Sigmoid colon (tissue), 7 donors: ENCODE measurements at regions of chr15 and their contacts with region 1.

Region 1: GRCh38 chr15:65384895-65385858 is 7.4 kb upstream of the IGDCC3 start:
- DNase-seq: peak; percentile 92
- H3K4me3 ChIP-seq: peak overlapping the region in 3 of 4 donors; percentile 21 to 41 (median 34)
- H3K27ac ChIP-seq: peak overlapping the region; percentile 39 to 52 (median 41)
- H3K4me1 ChIP-seq: peaks cover 0 to 19% (median 17%) of the 10 kb centered on the region in 4 donors
- H3K27me3 ChIP-seq: peaks cover 0 to 5% (median 0%) of the 10 kb centered on the region in 3 donors
- CTCF ChIP-seq: peak; percentile 83 to 86 (median 84)
- EP300 ChIP-seq: no peak
- POLR2A ChIP-seq: no peak

Region 2: GRCh38 chr15:65192016-65192415 is 193.2 kb before region 1 on chr15:
- intact Hi-C with region 1: loop called (anchors 10 kb)
- DNase-seq: peak; percentile 41
- H3K4me3 ChIP-seq: no peak overlapping the region
- H3K27ac ChIP-seq: no peak overlapping the region
- H3K4me1 ChIP-seq: peaks cover 0 to 31% (median 19%) of the 10 kb centered on the region in 4 donors
- H3K27me3 ChIP-seq: no peaks in the 10 kb centered on the region
- CTCF ChIP-seq: no peak
- EP300 ChIP-seq: no peak
- POLR2A ChIP-seq: no peak

Region 3: DNA sequence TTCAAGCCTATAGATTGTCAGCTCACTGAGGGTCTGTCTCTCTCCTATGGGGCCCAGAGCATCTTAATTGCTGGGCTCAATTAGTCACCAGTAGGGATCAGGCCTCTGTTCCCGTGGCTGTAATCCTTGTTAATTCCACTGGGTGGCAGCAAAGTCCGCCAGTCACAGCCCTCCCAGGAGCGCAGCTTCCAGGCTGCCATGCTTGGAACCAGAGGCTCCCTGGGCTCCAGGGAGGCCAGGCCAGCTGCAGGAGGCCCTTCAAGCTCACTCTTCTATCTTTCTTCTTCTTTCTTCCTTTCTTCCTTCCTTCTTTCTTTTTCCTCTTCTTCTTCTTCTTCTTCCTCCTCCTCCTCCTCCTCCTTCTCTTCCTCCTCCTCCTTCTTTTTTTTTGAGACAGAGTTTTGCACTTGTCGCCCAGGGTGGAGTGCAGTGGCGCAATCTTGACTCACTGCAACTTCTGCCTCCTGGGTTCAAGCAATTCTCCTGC is 66.3 kb before region 1 on chr15:
- intact Hi-C with region 1: loop called (anchors 1 kb)
- DNase-seq: peak; percentile 89
- H3K4me3 ChIP-seq: no peak overlapping the region
- H3K27ac ChIP-seq: no peak overlapping the region
- H3K4me1 ChIP-seq: peaks cover 0 to 13% (median 8%) of the 10 kb centered on the region in 4 donors
- H3K27me3 ChIP-seq: no peaks in the 10 kb centered on the region
- CTCF ChIP-seq: peak; percentile 89 to 95 (median 92)
- EP300 ChIP-seq: no peak
- POLR2A ChIP-seq: no peak